K562 (cell line): ENCODE measurements at regions of chrX and their contacts with region 1.

Region 1: DNA sequence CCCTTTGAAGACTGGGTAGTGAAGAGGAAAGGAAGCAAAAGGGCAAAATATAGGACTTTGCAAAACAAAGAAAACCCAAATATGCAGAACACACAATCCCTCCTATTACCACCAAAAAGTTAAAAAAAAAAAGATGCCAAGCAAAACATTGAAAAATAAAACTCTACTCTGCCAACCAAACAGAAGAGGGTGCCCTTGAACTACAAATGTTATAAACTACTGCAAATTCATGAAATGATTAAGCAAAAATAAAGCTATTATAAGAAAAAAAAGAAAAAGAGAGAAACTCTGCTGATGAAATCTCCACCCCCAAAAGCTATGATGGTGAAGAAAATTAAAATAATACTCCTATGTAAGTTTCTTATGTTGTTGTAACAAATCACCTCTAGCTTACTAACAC is 168.5 kb upstream of the STK26 start:
- DNase-seq: peak in 1 of 4 experiments; percentile 16
- ATAC-seq: no peak
- H3K4me3 ChIP-seq: no peak overlapping the region
- H3K27ac ChIP-seq: no peak overlapping the region
- H3K4me1 ChIP-seq: no peaks in the 10 kb centered on the region; a peak in 1 of 5 replicates
- H3K27me3 ChIP-seq: no peaks in the 10 kb centered on the region
- CTCF ChIP-seq: peak in 2 of 3 experiments; percentile 15 to 55; a peak in 3 of 6 replicates
- EP300 ChIP-seq: no peak
- POLR2A ChIP-seq: no peak
- RAD21 ChIP-seq: peak; percentile 18 to 47; a peak in 3 of 4 replicates

Region 2: DNA sequence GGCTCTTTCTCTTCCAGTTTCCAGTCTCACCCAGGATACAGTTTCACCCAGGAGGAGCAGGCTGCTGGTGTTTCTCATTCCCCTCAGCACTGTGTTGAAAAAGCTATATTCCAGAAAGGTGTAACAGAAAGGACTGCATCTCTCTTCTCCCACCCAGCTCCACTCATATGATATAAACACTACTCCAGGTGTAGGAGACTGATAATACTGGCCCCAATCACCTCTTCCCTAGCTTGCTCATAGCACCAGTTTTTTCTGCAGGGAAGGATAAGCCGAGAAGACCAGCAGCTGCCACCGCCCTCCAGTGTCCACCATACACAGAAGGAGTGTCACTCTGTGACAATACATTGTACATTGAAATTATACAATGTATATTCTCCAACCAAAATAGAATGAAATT is 63.0 kb after region 1 on chrX:
- CTCF ChIA-PET with region 1: no interaction called
- POLR2A ChIA-PET with region 1: no interaction called
- in situ Hi-C with region 1: no loop called
- intact Hi-C with region 1: loop called (anchors 2 kb)
- DNase-seq: peak; percentile 26 to 79 (median 52)
- ATAC-seq: peak; percentile 96
- H3K4me3 ChIP-seq: no peak overlapping the region
- H3K27ac ChIP-seq: peak overlapping the region; percentile 56
- H3K4me1 ChIP-seq: peaks cover 5 to 12% of the 10 kb centered on the region in 2 experiments; a peak in 3 of 5 replicates
- H3K27me3 ChIP-seq: no peaks in the 10 kb centered on the region
- CTCF ChIP-seq: peak in 1 of 3 experiments; percentile 44; a peak in 2 of 6 replicates
- EP300 ChIP-seq: peak; percentile 67
- POLR2A ChIP-seq: no peak
- RAD21 ChIP-seq: peak in 1 of 2 experiments; percentile 10; a peak in 1 of 4 replicates

Region 3: DNA sequence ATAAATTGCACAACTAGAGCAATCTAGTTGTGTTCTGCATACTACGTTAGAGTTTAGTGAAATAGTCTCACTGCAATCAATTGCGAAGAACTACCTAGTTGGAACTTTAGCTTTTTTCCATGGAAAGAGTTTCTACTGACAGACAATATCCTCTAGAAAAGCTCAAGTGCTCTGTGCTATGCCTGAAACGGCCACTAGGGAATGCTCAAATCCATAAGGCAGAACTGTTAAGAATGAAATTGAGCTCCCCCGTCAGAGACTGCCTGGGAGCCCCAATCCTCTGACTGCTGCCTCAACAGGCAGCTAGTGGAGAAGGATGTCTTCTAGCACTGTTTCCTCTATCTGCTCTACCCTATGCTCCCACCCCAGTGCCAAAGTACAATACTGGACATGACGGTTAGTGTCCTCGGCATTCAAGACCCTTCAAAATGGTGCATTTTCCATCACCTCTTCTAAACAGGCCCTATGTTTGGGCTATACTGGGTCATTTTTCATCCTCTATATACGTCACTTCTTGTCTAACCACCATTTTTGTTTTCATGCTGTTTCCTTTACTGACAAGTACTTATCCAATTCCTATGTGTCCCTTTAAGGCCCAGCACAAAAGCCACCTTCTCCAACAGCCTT is 238.0 kb after region 1 on chrX:
- CTCF ChIA-PET with region 1: no interaction called
- POLR2A ChIA-PET with region 1: no interaction called
- in situ Hi-C with region 1: no loop called
- intact Hi-C with region 1: loop called (anchors 5 kb)
- DNase-seq: peak; percentile 53 to 77 (median 55)
- ATAC-seq: peak; percentile 96
- H3K4me3 ChIP-seq: no peak overlapping the region
- H3K27ac ChIP-seq: no peak overlapping the region
- H3K4me1 ChIP-seq: no peaks in the 10 kb centered on the region
- H3K27me3 ChIP-seq: no peaks in the 10 kb centered on the region; a peak in 1 of 5 replicates
- CTCF ChIP-seq: peak; percentile 70 to 87 (median 80)
- EP300 ChIP-seq: no peak
- POLR2A ChIP-seq: no peak
- RAD21 ChIP-seq: peak; percentile 50 to 71

Region 4: GRCh38 chrX:132144061-132144460 is 289.5 kb after region 1 on chrX:
- CTCF ChIA-PET with region 1: no interaction called
- POLR2A ChIA-PET with region 1: no interaction called
- in situ Hi-C with region 1: no loop called
- intact Hi-C with region 1: no loop called
- DNase-seq: no peak
- ATAC-seq: no peak
- H3K4me3 ChIP-seq: no peak overlapping the region
- H3K27ac ChIP-seq: no peak overlapping the region
- H3K4me1 ChIP-seq: no peaks in the 10 kb centered on the region
- H3K27me3 ChIP-seq: no peaks in the 10 kb centered on the region; a peak in 1 of 5 replicates
- CTCF ChIP-seq: no peak
- EP300 ChIP-seq: no peak
- POLR2A ChIP-seq: no peak
- RAD21 ChIP-seq: no peak